ENCODE measurements at regions of chr9 and their contacts with region 1.

Region 1: GRCh38 chr9:4689687-4690104 is 10.3 kb downstream of the CDC37L1 start:
- DNase-seq: peak; percentile 51
- ATAC-seq: peak; percentile 63
- H3K4me3 ChIP-seq: peak overlapping the region; percentile 18; the same call in 1 of the 2 replicates
- H3K27ac ChIP-seq: peak overlapping the region; percentile 70
- H3K4me1 ChIP-seq: peaks cover 12% of the 10 kb centered on the region
- H3K27me3 ChIP-seq: no peaks in the 10 kb centered on the region
- CTCF ChIP-seq: no peak
- EP300 ChIP-seq: 0 out of 4 replicates have a peak, but pooled peaks of 1 of the 2 experiments have one; percentile 23
- POLR2A ChIP-seq: no peak
- RAD21 ChIP-seq: no peak

Region 2: DNA sequence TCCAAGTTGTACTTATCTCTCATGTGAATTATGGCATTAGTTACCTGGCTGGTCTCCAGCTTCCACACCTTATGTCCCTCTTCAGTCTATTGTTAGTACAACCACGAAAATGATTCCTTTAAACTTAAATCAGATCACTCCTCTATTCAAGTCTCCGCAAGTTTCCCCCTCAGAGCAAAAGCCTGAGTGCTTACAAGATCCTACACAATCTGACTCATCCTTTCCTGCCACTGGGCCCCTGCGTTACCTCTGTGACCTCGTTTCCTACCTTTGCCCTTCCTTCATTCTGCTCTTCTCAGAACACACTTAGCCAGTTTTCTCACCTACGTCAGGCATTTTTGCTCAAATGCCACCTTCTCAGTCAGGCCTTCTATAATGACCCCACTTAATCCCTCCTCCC is 344.8 kb before region 1 on chr9:
- CTCF ChIA-PET with region 1: no interaction called
- POLR2A ChIA-PET with region 1: no interaction called
- RAD21 ChIA-PET with region 1: no interaction called
- SMC1A ChIA-PET with region 1: no interaction called
- in situ Hi-C with region 1: no loop called
- intact Hi-C with region 1: no loop called
- DNase-seq: no peak
- ATAC-seq: no peak
- H3K4me3 ChIP-seq: no peak overlapping the region
- H3K27ac ChIP-seq: no peak overlapping the region
- H3K4me1 ChIP-seq: no peaks in the 10 kb centered on the region
- H3K27me3 ChIP-seq: no peaks in the 10 kb centered on the region
- CTCF ChIP-seq: no peak
- EP300 ChIP-seq: no peak
- POLR2A ChIP-seq: no peak
- RAD21 ChIP-seq: no peak

Region 3: GRCh38 chr9:4679268-4680172 is 10.2 kb before region 1 on chr9 and contains the start of gene CDC37L1:
- CTCF ChIA-PET with region 1: no interaction called
- POLR2A ChIA-PET with region 1: interaction called, 6 read pairs
- RAD21 ChIA-PET with region 1: interaction called, 3 read pairs
- SMC1A ChIA-PET with region 1: interaction called, 4 read pairs
- in situ Hi-C with region 1: no loop called
- intact Hi-C with region 1: loop called (anchors 1 kb)
- DNase-seq: peak; percentile 83
- ATAC-seq: peak; percentile 94
- H3K4me3 ChIP-seq: peak within 1 kb of the TSS; percentile 89
- H3K27ac ChIP-seq: peak within 1 kb of the TSS; percentile 96
- H3K4me1 ChIP-seq: peaks cover 3% of the 10 kb centered on the region; the same call in 1 of the 2 replicates
- H3K27me3 ChIP-seq: no peaks in the 10 kb centered on the region
- CTCF ChIP-seq: peak; percentile 44 to 66 (median 60); a peak in 5 of 6 replicates
- EP300 ChIP-seq: no peak
- POLR2A ChIP-seq: peak; percentile 97
- RAD21 ChIP-seq: peak; percentile 21; the same call in 1 of the 2 replicates
- polyA plus RNA-seq, gene CDC37L1: 2.2 to 3.6 TPM